ENCODE measurements at regions of chr15 and their contacts with region 1.

Region 1: GRCh38 chr15:55279746-55280351 is 9.8 kb downstream of the RAB27A start:
- DNase-seq: peak; percentile 49 to 78
- ATAC-seq: peak; percentile 65 to 76 (median 71)
- H3K4me3 ChIP-seq: no peak overlapping the region
- H3K4me3 Mint-ChIP-seq: peak overlapping the region; percentile 90
- H3K27ac ChIP-seq: peak overlapping the region; percentile 93
- H3K27ac Mint-ChIP-seq: peak overlapping the region; percentile 93 to 99
- H3K4me1 ChIP-seq: peaks cover 80% of the 10 kb centered on the region
- H3K4me1 Mint-ChIP-seq: peaks cover 94 to 96% of the 10 kb centered on the region in 2 donors
- H3K27me3 ChIP-seq: no peaks in the 10 kb centered on the region
- H3K27me3 Mint-ChIP-seq: no peaks in the 10 kb centered on the region
- CTCF ChIP-seq: no peak

Region 2: DNA sequence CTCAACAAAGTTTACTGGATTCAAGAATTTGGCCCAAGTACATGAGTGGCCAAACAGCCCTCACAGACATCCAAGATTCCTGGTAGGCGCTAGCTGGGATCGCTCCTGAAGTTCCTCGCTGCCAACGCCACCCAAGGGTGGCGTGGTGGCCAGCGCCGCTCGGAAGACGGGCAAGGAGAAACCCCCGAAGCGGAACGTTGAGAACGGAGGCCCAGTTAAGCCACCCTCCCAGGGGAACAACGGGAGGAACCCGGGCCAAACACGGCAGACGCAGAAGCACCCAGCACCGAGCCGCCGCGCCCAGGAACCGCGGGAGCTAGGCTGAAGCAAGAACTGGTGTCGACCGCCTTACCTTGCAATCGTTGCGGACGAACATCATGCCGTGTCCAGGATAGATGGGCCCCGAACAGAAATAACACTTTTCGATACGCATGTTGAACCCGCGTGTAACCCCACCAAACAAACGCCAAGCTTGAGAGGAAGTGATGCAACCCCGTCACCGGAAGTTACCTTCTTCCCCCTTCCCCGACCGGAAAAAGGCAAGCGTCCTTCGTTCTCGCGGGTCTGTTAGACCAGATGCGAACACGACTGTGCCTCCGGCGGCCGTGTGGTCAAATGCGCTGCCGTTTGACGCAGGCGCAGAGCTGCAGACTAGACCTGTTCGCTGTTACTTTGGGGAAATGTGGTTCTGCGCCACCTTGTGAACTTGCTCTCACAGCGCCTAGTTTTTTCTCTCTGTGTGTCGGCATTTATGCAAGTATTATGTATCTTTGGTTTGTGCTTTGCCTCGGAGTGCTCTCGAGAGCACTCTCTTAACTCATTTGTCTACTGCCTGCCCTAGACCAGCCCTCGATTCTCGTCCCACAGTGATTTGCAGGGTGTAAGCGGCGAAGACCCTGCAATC is 83.1 kb before region 1 on chr15 and contains the start of gene RSL24D1:
- intact Hi-C with region 1: loop called (anchors 1 kb)
- DNase-seq: peak; percentile 89 to 99
- ATAC-seq: peak; percentile 94 to 99 (median 97)
- H3K4me3 ChIP-seq: peak within 1 kb of the TSS; percentile 82
- H3K4me3 Mint-ChIP-seq: no peak within 1 kb of the TSS
- H3K27ac ChIP-seq: peak within 1 kb of the TSS; percentile 90
- H3K27ac Mint-ChIP-seq: no peak within 1 kb of the TSS
- H3K4me1 ChIP-seq: peaks cover 3% of the 10 kb centered on the region
- H3K4me1 Mint-ChIP-seq: peaks cover 0 to 9% of the 10 kb centered on the region in 2 donors
- H3K27me3 ChIP-seq: no peaks in the 10 kb centered on the region
- H3K27me3 Mint-ChIP-seq: no peaks in the 10 kb centered on the region
- CTCF ChIP-seq: peak; percentile 27
- total RNA-seq, gene RSL24D1: 97.4 to 102 (median 102) TPM

Region 3: GRCh38 chr15:55267401-55268175 is 12.3 kb before region 1 on chr15:
- intact Hi-C with region 1: loop called (anchors 1 kb)
- DNase-seq: peak; percentile 68 to 90
- ATAC-seq: peak; percentile 85 to 94 (median 90)
- H3K4me3 ChIP-seq: peak overlapping the region; percentile 6
- H3K4me3 Mint-ChIP-seq: peak overlapping the region; percentile 76
- H3K27ac ChIP-seq: peak overlapping the region; percentile 88
- H3K27ac Mint-ChIP-seq: peak overlapping the region; percentile 96 to 98
- H3K4me1 ChIP-seq: peaks cover 50% of the 10 kb centered on the region
- H3K4me1 Mint-ChIP-seq: peaks cover 81 to 93% of the 10 kb centered on the region in 2 donors
- H3K27me3 ChIP-seq: no peaks in the 10 kb centered on the region
- H3K27me3 Mint-ChIP-seq: no peaks in the 10 kb centered on the region
- CTCF ChIP-seq: no peak

Region 4: DNA sequence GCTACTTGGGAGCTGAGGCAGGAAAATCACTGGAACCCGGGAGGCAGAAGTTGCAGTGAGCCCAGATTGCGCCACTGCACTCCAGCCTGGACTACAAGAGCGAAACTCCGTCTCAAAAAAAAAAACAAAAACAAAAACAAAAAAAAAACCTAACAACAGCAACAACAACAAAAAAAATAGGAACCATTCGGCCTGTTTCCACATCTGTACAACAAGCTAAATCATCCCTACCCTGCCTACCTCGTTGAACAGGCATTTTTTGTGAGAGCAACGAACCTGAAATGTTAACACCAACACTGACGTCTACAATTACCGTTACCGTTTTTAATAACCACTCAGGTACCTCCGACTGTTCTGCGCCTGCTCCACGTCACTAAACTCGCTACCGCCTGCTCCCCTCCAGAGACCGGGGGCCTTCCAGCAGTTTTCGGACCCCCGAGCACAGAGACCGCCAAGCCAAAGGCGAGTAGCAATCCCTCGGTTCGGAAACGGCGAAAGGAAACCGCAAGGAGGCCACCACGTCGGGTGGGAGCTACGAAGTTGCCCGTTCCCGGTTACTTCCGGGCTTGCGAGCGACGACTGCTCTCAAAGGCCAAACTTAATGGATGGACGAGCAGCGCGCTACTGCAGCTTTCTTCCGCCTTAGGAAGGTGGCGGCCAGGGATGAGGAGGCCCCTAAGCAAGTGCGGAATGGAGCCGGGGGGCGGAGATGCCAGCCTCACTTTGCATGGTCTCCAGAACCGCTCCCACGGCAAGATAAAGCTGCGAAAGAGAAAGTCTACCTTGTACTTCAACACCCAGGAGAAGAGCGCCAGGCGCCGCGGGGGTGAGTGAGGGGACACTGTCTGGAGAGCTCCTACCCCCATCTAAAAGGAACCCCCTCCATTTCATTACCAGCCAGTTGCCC is 39.0 kb after region 1 on chr15 and contains the starts of genes PIGB and PIGBOS1:
- intact Hi-C with region 1: loop called (anchors 5 kb)
- DNase-seq: peak; percentile 80 to 88
- ATAC-seq: peak; percentile 88 to 93 (median 91)
- H3K4me3 ChIP-seq: peak within 1 kb of the TSS; percentile 76
- H3K4me3 Mint-ChIP-seq: peak within 1 kb of the TSS; percentile 99
- H3K27ac ChIP-seq: peak within 1 kb of the TSS; percentile 91
- H3K27ac Mint-ChIP-seq: peak within 1 kb of the TSS; percentile 99
- H3K4me1 ChIP-seq: peaks cover 17% of the 10 kb centered on the region
- H3K4me1 Mint-ChIP-seq: peaks cover 57 to 65% of the 10 kb centered on the region in 2 donors
- H3K27me3 ChIP-seq: no peaks in the 10 kb centered on the region
- H3K27me3 Mint-ChIP-seq: no peaks in the 10 kb centered on the region
- CTCF ChIP-seq: no peak
- total RNA-seq, gene PIGB: 24.9 to 33.5 (median 26.1) TPM
- total RNA-seq, gene PIGBOS1: 7.7 to 10.9 (median 9.3) TPM

Measured in natural killer cell (primary cell).